ENCODE measurements at regions of chr4 and their contacts with region 1.

Region 1: GRCh38 chr4:54064295-54065111 is at the start of gene CHIC2:
- DNase-seq: peak; percentile 94
- H3K4me3 ChIP-seq: peak within 1 kb of the TSS; percentile 71 to 78 (median 78)
- H3K27ac ChIP-seq: peak within 1 kb of the TSS; percentile 84
- H3K4me1 ChIP-seq: peaks cover 43% of the 10 kb centered on the region
- H3K27me3 ChIP-seq: no peaks in the 10 kb centered on the region
- CTCF ChIP-seq: no peak
- total RNA-seq, gene CHIC2: 45.4 to 46.7 TPM

Region 2: GRCh38 chr4:53929955-53930798 is 134.3 kb before region 1 on chr4:
- CTCF ChIA-PET with region 1: no interaction called
- dilution Hi-C with region 1: no loop called
- in situ Hi-C with region 1: no loop called
- intact Hi-C with region 1: loop called (anchors 1 kb)
- DNase-seq: peak; percentile 73
- H3K4me3 ChIP-seq: no peak overlapping the region
- H3K27ac ChIP-seq: no peak overlapping the region
- H3K4me1 ChIP-seq: peaks cover 28% of the 10 kb centered on the region
- H3K27me3 ChIP-seq: no peaks in the 10 kb centered on the region
- CTCF ChIP-seq: peak; percentile 75 to 89

Region 3: DNA sequence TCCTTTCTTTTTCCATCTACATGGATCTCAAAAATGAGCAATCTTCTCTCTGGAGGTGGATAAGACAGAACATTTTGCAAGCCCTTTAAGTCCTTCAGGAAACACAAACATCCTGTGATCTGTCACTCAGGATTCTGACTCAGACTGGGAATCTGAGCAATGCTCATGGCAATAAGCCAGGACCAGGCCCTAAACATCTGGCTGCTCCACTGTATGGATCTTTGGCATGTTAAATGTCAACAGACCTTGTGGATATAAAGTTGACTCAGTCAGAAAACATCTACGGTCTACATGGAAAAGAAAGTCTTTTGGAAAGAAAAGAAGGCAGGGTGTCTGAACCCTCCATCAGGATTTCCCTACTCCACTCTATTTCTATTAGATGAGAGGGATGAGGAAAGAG is 17.7 kb after region 1 on chr4:
- CTCF ChIA-PET with region 1: no interaction called
- dilution Hi-C with region 1: no loop called
- in situ Hi-C with region 1: no loop called
- intact Hi-C with region 1: loop called (anchors 2 kb)
- DNase-seq: peak; percentile 97
- H3K4me3 ChIP-seq: no peak overlapping the region
- H3K27ac ChIP-seq: peak overlapping the region; percentile 50
- H3K4me1 ChIP-seq: peaks cover 41% of the 10 kb centered on the region
- H3K27me3 ChIP-seq: no peaks in the 10 kb centered on the region
- CTCF ChIP-seq: no peak

Region 4: GRCh38 chr4:54152846-54153600 is 88.5 kb after region 1 on chr4:
- CTCF ChIA-PET with region 1: no interaction called
- dilution Hi-C with region 1: no loop called
- in situ Hi-C with region 1: no loop called
- intact Hi-C with region 1: loop called (anchors 5 kb)
- DNase-seq: peak; percentile 83
- H3K4me3 ChIP-seq: no peak overlapping the region
- H3K27ac ChIP-seq: peak overlapping the region; percentile 93
- H3K4me1 ChIP-seq: peaks cover 26% of the 10 kb centered on the region
- H3K27me3 ChIP-seq: no peaks in the 10 kb centered on the region
- CTCF ChIP-seq: no peak

Region 5: DNA sequence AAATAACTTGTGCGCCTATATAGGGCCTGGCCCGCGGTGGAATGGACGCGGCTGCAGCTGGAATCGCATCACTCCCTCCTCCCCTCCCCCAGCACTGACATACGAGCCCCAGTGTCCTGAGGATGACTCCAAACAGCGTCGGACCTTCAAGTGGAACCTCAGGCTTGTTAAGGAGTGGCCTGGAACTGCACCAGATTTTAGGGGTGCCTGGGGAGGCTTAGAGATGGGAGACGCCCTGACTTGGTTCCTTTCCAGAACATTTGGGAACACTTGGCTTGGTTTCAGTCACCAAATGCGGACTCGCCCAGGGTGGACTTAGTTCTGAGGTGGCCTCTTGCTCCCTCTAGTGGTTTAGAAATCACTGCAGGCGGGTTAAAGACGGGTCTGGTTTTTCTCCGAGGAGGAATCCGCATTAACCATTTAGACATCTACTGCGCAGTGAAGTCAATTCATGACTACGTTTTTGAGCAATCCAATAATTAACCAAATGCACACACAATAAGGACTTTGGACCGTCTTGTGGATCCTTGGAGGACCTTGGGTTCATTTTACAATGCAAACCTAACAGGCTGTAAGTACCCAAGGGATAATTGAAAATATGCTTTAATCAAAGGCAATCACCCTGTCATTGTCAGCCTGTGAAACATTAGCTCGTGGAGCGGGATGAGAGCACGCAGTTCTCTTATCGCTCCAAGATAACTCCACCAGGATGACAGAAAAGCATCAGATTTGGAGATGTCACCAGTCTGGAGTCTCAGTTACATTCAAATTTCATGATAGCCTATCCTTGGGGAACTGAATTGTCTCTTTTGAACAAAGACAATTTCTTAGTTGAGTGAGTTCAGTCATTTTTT is 153.4 kb after region 1 on chr4:
- CTCF ChIA-PET with region 1: no interaction called
- dilution Hi-C with region 1: no loop called
- in situ Hi-C with region 1: loop called in 1 of 2 experiments (anchors 10 kb)
- intact Hi-C with region 1: loop called (anchors 1 kb)
- DNase-seq: peak; percentile 82
- H3K4me3 ChIP-seq: peak overlapping the region; percentile 23 to 52 (median 34)
- H3K27ac ChIP-seq: peak overlapping the region; percentile 22
- H3K4me1 ChIP-seq: no peaks in the 10 kb centered on the region
- H3K27me3 ChIP-seq: no peaks in the 10 kb centered on the region
- CTCF ChIP-seq: peak; percentile 73 to 92

Region 6: DNA sequence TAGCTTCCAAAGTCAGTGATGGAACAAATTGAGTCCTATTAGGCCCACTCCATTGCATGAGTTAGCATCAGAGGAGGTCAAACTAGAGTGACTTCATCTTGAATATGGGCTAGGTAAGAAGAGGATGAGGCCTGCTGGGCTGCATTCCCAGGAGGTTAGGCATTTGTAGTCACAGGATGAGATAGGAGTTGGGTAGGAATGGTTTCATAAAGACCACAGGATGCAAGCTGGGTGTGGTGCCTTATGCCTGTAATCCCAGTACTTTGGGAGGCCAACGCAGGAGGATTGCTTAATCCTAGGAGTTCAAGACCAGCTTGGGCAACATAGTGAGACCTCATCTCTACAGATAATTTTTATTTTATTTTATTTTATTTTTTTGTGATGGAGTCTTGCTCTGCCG is 191.4 kb after region 1 on chr4:
- CTCF ChIA-PET with region 1: no interaction called
- dilution Hi-C with region 1: no loop called
- in situ Hi-C with region 1: no loop called
- intact Hi-C with region 1: no loop called
- DNase-seq: peak; percentile 51
- H3K4me3 ChIP-seq: no peak overlapping the region
- H3K27ac ChIP-seq: no peak overlapping the region
- H3K4me1 ChIP-seq: no peaks in the 10 kb centered on the region
- H3K27me3 ChIP-seq: no peaks in the 10 kb centered on the region
- CTCF ChIP-seq: no peak

Region 7: GRCh38 chr4:54625125-54625790 is 560.8 kb after region 1 on chr4:
- CTCF ChIA-PET with region 1: no interaction called
- dilution Hi-C with region 1: no loop called
- in situ Hi-C with region 1: no loop called
- intact Hi-C with region 1: no loop called
- DNase-seq: no peak
- H3K4me3 ChIP-seq: no peak overlapping the region
- H3K27ac ChIP-seq: no peak overlapping the region
- H3K4me1 ChIP-seq: no peaks in the 10 kb centered on the region
- H3K27me3 ChIP-seq: peaks cover 4% of the 10 kb centered on the region
- CTCF ChIP-seq: no peak

Measured in mammary epithelial cell (primary cell).